ENCODE measurements at regions of chr17 and their contacts with region 1.

Region 1: DNA sequence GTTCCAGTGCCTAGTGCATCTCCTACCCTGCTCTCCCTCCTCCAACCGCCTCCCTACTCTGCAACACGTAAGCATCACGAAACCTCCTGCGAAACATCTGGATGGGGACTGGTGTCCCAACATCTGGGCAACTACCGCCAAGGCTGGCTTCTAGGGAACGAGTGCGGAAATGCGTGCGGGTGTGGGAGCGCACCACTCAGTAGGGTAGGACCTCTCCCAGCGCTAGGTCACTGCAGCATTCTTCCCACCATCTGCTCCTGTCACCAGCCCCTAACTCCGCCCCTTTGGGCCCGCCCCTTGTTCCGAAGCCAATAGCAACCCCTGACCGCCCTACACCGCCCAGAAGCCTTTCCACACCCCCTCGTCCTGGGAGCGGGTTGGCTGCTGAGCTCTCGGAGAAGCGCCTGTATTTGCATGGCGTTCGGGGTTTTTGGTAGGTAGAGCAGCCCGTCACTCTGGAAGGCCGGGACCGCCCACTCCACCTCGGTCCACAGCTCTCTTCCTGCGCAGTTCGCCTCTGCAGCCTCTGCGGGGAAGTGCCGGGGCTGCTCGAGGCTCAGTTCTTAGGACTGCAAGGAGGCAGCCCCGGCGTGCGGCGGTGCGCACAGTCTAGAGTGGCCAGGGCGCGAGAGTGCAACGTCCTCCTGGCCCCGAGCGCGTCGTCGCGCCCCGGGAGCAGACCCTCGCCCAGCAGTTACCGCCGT is at the start of gene HS3ST3B1:
- DNase-seq: peak; percentile 81
- ATAC-seq: peak; percentile 84
- H3K4me3 Mint-ChIP-seq: peak within 1 kb of the TSS; percentile 87
- H3K27ac Mint-ChIP-seq: peak within 1 kb of the TSS; percentile 86
- H3K4me1 Mint-ChIP-seq: peaks cover 58% of the 10 kb centered on the region
- H3K27me3 Mint-ChIP-seq: peaks cover 50% of the 10 kb centered on the region
- CTCF ChIP-seq: no peak
- total RNA-seq, gene HS3ST3B1: 3.1 and 3.3 TPM in 2 replicates

Region 2: DNA sequence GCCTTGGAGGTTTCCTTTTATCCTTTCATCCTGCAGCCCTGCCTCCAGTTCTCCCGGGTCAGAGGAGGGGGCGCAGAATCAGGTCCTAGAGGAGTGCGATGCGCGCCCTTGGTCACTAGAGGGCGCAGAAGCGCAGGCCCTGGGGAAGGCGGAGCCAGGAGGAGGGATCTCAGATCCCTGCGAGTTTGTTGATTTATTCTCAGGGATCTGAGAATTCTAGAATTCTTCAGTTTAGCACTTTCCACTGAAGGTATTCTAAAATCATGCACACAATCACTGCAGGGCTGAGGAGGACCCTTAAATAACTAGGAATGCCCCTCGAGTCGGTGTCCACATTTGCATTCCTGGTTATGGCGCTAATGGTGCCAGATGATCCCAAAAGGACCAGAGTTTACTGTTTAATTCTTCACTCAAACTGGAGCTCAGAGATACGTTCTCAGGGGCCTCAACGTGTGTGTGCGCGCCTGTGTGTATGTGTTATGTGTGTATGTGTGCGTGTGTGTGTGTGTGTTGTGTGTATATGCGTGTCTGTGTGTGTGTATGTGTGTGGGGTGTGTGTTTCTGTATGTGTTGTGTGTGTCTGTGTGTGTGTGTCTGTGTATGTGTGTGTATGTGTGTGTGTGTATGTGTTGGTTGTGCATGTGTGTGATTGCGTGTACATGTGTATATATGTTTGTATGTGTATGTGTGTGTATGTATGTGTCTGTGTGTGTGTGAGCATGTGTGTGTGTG is 1276.0 kb before region 1 on chr17:
- CTCF ChIA-PET with region 1: no interaction called
- POLR2A ChIA-PET with region 1: no interaction called
- intact Hi-C with region 1: loop called (anchors 2 kb)
- DNase-seq: peak; percentile 59
- ATAC-seq: peak; percentile 100
- H3K4me3 Mint-ChIP-seq: peak overlapping the region; percentile 11
- H3K27ac Mint-ChIP-seq: no peak overlapping the region
- H3K4me1 Mint-ChIP-seq: peaks cover 7% of the 10 kb centered on the region
- H3K27me3 Mint-ChIP-seq: peaks cover 11% of the 10 kb centered on the region
- CTCF ChIP-seq: peak; percentile 85

Region 3: DNA sequence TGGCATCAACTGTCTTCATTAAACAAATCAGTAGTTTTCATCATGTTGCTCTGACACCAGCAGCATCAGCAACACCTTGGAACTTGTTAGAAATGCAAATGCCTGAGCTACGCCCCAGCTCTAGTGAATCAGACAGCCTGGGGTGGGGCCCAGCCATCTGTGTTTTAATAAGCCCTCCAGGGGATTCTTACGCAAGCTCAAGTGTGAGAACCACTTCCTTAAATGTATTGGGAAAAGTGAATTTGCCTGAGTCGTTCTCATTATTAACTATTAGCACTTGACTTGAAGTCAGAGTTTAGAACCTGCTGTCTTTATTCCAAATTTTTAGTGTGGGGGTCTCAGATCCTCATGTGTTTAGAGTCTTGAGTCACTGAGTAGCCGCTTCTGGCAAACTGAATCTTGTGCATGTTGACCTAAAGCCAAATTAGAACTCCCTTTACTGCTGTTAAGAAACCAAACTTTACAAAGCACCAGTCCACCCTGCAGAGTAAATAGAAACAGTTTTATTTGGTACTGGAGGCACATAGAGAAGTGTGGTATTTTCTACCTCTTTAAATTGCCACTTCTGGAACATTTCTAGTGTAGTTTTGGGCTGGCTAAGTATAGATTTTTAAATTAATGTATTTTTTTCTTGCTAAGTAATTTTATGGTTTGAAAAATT is 368.8 kb before region 1 on chr17:
- CTCF ChIA-PET with region 1: interaction called, 3 read pairs
- POLR2A ChIA-PET with region 1: interaction called, 12 read pairs
- intact Hi-C with region 1: loop called (anchors 1 kb)
- DNase-seq: peak; percentile 44
- ATAC-seq: peak; percentile 92
- H3K4me3 Mint-ChIP-seq: peak overlapping the region; percentile 33
- H3K27ac Mint-ChIP-seq: peak overlapping the region; percentile 91
- H3K4me1 Mint-ChIP-seq: peaks cover 41% of the 10 kb centered on the region
- H3K27me3 Mint-ChIP-seq: no peaks in the 10 kb centered on the region
- CTCF ChIP-seq: no peak

Region 4: DNA sequence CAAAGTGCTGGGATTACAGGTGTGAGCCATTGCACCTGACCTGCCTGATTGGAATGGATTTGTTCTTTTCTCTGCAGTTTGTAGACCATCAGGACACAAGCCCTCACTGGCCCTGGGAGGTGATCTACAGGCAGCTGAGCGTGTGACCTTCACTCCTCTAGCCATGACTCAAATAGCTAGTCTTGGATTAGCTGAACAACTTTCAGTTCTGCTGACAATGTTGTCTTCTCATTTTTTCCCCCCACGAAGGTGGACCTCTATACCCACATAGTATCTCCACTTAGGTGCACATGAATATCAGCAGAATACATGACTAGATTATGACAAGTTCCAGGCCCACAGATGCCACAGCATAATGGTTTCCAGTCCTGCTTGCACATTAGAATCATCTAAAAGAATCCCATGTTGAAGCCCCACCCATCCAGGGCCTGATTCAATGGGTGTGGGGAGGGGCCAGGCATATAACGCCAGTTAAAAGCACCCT is 36.9 kb after region 1 on chr17:
- CTCF ChIA-PET with region 1: no interaction called
- POLR2A ChIA-PET with region 1: interaction called, 3 read pairs
- intact Hi-C with region 1: loop called (anchors 1 kb)
- DNase-seq: no peak
- ATAC-seq: peak; percentile 82
- H3K4me3 Mint-ChIP-seq: no peak overlapping the region
- H3K27ac Mint-ChIP-seq: no peak overlapping the region
- H3K4me1 Mint-ChIP-seq: peaks cover 18% of the 10 kb centered on the region
- H3K27me3 Mint-ChIP-seq: peaks cover 17% of the 10 kb centered on the region
- CTCF ChIP-seq: no peak

Region 5: DNA sequence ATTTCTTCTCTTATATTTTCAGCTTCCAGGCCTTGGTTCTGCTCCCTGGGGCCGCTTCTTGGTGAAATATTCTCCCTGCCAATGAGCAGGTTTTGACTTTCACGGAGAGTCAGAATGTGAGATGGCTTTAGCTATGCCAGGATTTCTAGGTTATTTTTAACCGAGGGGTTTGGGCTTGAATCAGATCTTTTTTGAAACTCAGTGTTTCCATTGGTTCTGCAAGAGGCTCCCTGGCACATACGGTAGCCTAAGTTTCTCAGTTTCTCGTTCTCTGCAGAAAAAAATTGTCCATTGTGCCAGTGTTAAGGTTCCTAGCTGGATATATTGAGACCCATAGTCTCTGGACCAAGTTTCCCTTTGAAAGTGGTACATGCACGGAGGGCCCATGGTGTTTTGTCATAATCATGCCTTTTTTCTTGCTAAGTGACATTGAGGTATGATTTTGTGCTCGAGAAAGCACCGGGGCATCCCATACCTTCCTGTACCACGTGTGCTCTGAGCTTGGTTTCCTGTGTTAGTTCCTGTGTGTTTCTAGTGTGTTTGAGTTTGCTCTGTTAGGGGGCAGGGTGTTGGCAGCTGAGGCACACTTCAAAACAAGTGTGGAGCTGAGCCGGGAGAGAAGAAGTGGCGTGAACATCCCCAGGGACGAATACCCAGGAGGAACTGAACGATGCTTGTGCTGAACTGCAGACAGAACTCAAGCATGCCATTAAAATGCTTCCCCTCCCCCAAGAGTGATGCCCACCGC is 127.3 kb after region 1 on chr17:
- CTCF ChIA-PET with region 1: interaction called, 6 read pairs
- POLR2A ChIA-PET with region 1: interaction called, 30 read pairs
- intact Hi-C with region 1: loop called (anchors 1 kb)
- DNase-seq: peak; percentile 37
- ATAC-seq: peak; percentile 86
- H3K4me3 Mint-ChIP-seq: peak overlapping the region; percentile 75
- H3K27ac Mint-ChIP-seq: peak overlapping the region; percentile 87
- H3K4me1 Mint-ChIP-seq: peaks cover 50% of the 10 kb centered on the region
- H3K27me3 Mint-ChIP-seq: no peaks in the 10 kb centered on the region
- CTCF ChIP-seq: no peak

Region 6: GRCh38 chr17:15999439-16000350 is 1699.0 kb after region 1 on chr17 and contains the starts of genes TTC19 and ZSWIM7:
- CTCF ChIA-PET with region 1: no interaction called
- POLR2A ChIA-PET with region 1: no interaction called
- intact Hi-C with region 1: loop called (anchors 2 kb)
- DNase-seq: peak; percentile 92
- ATAC-seq: peak; percentile 87
- H3K4me3 Mint-ChIP-seq: peak within 1 kb of the TSS; percentile 97
- H3K27ac Mint-ChIP-seq: peak within 1 kb of the TSS; percentile 96
- H3K4me1 Mint-ChIP-seq: peaks cover 28% of the 10 kb centered on the region
- H3K27me3 Mint-ChIP-seq: no peaks in the 10 kb centered on the region
- CTCF ChIP-seq: no peak
- total RNA-seq, gene TTC19: 29.7 and 34.2 TPM in 2 replicates
- total RNA-seq, gene ZSWIM7: 15.0 and 18.1 TPM in 2 replicates

Measured in activated B cell treated with CpG ODN at 0.5 μM for 24 hours (primary cell).